ENCODE measurements at regions of chr3 and their contacts with region 1.

Region 1: DNA sequence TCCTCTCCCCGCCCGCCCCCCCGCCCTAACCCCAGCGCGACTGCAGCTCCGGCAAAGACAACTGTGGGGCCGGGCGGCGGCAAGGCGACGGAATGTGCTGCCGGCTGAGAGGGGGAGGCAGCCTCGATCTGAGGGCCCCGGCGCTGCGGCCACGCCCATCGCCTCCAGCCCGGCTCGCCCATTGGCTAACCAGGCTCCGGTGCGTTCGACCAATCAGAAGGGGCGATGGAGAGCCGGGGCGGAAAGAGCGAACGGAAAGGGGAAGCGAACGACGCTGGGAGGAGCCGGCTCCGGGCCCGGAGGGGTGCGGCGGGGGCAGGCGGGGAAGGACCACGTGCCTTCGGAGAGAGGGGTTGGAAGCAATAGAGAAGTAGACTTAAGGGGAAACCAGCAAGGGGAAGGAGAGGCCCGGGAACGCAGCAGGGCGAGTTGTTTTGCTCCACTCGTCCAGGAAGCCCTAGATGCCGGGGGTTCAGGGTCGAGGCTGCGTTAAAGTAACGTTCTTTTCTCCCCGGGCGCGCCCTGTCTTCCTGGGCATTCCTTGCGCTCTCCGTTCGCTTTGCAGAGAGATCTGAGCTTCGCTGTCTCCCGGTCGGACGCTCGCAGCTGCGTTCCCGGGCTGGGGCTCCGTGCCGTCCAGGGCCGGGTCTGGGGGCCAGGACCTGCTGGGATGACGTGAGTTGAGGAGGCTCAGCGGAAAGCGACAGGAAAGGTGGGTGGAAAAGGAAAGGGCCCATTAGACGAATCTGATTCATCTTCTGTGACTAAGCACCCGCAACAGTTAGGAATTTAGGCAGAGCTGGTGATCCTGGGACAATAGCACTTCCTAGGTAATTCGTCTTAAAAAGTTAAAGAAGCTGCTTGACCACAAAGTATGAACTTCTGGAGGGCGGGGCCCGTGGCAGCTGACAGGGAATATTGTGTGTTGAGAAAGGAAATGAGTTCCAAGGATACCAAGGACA is at the start of gene KPNA4:
- DNase-seq: peak; percentile 96 to 98 (median 97)
- ATAC-seq: peak; percentile 95
- H3K4me3 ChIP-seq: peak within 1 kb of the TSS; percentile 86
- H3K4me3 Mint-ChIP-seq: peak within 1 kb of the TSS; percentile 86 to 98 (median 97)
- H3K27ac ChIP-seq: peak within 1 kb of the TSS; percentile 95
- H3K27ac Mint-ChIP-seq: peak within 1 kb of the TSS; percentile 91 to 97 (median 95)
- H3K4me1 ChIP-seq: peaks cover 16 to 19% of the 10 kb centered on the region in 2 donors
- H3K4me1 Mint-ChIP-seq: peaks cover 40 to 58% (median 54%) of the 10 kb centered on the region in 7 donors
- H3K27me3 ChIP-seq: no peaks in the 10 kb centered on the region
- H3K27me3 Mint-ChIP-seq: peaks cover 0 to 2% (median 0%) of the 10 kb centered on the region in 5 donors
- total RNA-seq, gene KPNA4: 38.3 to 55.4 (median 45.9) TPM

Region 2: DNA sequence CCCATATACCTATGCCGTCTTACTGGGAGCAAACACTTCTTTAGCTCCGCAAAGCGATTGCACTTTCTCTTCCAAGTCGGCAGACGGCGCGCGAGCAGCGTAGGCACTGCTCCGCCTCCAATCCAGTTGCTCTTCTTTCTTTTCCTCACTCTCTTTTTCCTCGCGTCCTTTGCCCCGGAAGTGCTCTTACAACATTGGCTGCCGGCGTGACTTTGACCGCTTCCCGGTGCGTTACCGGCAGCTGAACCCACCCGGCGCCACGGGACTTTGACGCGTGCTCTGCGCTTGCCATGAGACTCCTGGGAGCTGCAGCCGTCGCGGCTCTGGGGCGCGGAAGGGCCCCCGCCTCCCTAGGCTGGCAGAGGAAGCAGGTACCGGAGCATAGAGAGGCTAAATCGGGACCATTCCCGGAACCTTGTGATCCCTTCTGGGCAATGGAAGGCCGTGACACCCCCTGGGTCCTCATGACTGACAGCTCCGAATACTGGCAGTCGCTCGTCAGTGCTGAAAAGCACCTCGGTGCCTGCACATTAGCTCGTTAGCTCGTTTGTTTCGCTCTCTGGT is 1921.3 kb before region 1 on chr3 and contains the start of gene GFM1:
- CTCF ChIA-PET with region 1: no interaction called
- POLR2A ChIA-PET with region 1: no interaction called
- intact Hi-C with region 1: loop called (anchors 2 to 5 kb)
- DNase-seq: peak; percentile 76 to 92 (median 86)
- ATAC-seq: peak; percentile 98
- H3K4me3 ChIP-seq: peak within 1 kb of the TSS; percentile 98
- H3K4me3 Mint-ChIP-seq: peak within 1 kb of the TSS; percentile 87 to 98 (median 96)
- H3K27ac ChIP-seq: peak within 1 kb of the TSS; percentile 82
- H3K27ac Mint-ChIP-seq: peak within 1 kb of the TSS; percentile 63 to 96 (median 93)
- H3K4me1 ChIP-seq: peaks cover 8 to 21% of the 10 kb centered on the region in 2 donors
- H3K4me1 Mint-ChIP-seq: peaks cover 17 to 58% (median 41%) of the 10 kb centered on the region in 7 donors
- H3K27me3 ChIP-seq: no peaks in the 10 kb centered on the region
- H3K27me3 Mint-ChIP-seq: no peaks in the 10 kb centered on the region
- total RNA-seq, gene GFM1: 36.4 to 43.4 (median 41.8) TPM

Region 3: GRCh38 chr3:160225176-160226025 is 340.3 kb before region 1 on chr3 and contains the start of gene C3orf80:
- CTCF ChIA-PET with region 1: no interaction called
- POLR2A ChIA-PET with region 1: no interaction called
- intact Hi-C with region 1: no loop called
- DNase-seq: peak in 8 of 9 donors; percentile 7 to 64 (median 34)
- ATAC-seq: peak; percentile 81
- H3K4me3 ChIP-seq: peak within 1 kb of the TSS; percentile 46
- H3K4me3 Mint-ChIP-seq: peak within 1 kb of the TSS; percentile 79 to 92 (median 86)
- H3K27ac ChIP-seq: no peak within 1 kb of the TSS
- H3K27ac Mint-ChIP-seq: no peak within 1 kb of the TSS
- H3K4me1 ChIP-seq: peaks cover 8 to 17% of the 10 kb centered on the region in 2 donors
- H3K4me1 Mint-ChIP-seq: peaks cover 9 to 23% (median 19%) of the 10 kb centered on the region in 7 donors
- H3K27me3 ChIP-seq: peaks cover 11 to 22% of the 10 kb centered on the region in 2 donors
- H3K27me3 Mint-ChIP-seq: peaks cover 46 to 75% (median 53%) of the 10 kb centered on the region in 5 donors
- total RNA-seq, gene C3orf80: 0.19 TPM in 1 of 5 experiments, not detected in the others

Region 4: DNA sequence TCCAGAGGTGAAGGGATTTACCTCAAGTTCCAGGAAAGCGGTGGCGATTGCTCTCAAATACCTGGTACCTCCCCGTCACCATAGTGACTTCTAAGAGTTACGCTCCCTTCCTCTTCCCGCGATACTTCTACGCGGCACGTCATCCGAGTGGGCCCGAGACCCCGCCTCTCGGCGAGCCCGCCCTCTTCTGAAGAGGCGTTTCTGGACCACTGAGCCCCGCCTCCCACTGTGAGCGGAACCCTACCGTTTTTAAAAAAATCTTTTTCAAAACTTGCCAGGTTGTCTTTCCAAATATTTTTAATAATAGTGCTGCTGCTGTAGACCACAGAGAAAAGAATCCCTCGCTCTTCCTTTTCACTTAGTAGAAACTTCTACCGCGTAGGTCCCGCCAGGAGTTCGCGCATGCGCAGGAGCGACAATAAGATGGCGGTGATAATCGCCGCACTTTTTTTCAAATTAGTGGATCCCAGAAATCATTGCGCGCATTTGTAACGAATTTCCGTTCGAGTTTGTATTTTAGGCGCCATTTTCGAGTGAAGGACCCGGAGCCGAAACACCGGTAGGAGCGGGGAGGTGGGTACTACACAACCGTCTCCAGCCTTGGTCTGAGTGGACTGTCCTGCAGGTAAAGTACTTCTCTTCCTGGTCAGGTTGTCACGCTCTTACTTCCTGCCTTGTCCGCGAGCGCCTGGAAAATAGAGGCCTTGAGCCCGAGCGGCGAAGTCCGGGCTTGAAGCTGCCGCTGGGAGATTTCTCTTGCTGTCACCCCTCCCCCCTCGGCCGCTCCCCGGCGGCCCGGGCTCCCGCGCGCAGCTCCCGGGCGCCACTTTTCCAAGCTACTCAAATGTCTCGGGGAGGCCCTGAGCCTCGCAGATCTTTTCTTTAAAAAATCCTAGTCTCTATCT is 166.3 kb before region 1 on chr3 and contains the starts of genes IFT80 and SMC4:
- CTCF ChIA-PET with region 1: no interaction called
- POLR2A ChIA-PET with region 1: interaction called, 3 read pairs
- intact Hi-C with region 1: loop called (anchors 1 kb)
- DNase-seq: peak; percentile 91 to 98 (median 96)
- ATAC-seq: peak; percentile 98
- H3K4me3 ChIP-seq: peak within 1 kb of the TSS; percentile 86
- H3K4me3 Mint-ChIP-seq: peak within 1 kb of the TSS; percentile 86 to 99 (median 98)
- H3K27ac ChIP-seq: peak within 1 kb of the TSS; percentile 88
- H3K27ac Mint-ChIP-seq: peak within 1 kb of the TSS; percentile 98 to 100 (median 100)
- H3K4me1 ChIP-seq: peaks cover 11 to 23% of the 10 kb centered on the region in 2 donors
- H3K4me1 Mint-ChIP-seq: peaks cover 24 to 64% (median 57%) of the 10 kb centered on the region in 7 donors
- H3K27me3 ChIP-seq: peaks cover 0 to 4% of the 10 kb centered on the region in 2 donors
- H3K27me3 Mint-ChIP-seq: peaks cover 5 to 19% (median 9%) of the 10 kb centered on the region in 5 donors
- total RNA-seq, gene IFT80: 19.6 to 36.2 (median 30.4) TPM
- total RNA-seq, gene SMC4: 37.4 to 185 (median 47.9) TPM

Region 5: DNA sequence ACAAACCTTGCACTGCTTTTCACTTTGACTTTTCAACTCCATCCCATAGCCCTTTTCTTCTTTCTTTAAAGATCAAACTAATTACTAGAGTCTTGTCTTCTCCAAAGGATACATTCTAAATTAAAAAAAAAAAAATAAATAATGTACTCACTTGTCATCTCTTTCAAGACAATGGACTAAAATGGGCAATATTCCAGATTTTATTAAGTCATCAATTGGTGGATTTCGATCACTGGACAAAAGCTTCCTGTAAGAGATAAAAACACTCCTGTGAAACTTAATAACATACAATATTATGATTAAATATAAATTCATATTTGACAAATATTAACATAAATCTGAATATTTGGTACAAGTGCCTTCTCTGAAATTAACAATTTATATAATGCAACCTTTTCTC is 34.4 kb before region 1 on chr3:
- CTCF ChIA-PET with region 1: no interaction called
- POLR2A ChIA-PET with region 1: no interaction called
- intact Hi-C with region 1: loop called (anchors 2 to 5 kb)
- DNase-seq: no peak
- ATAC-seq: no peak
- H3K4me3 ChIP-seq: no peak overlapping the region
- H3K4me3 Mint-ChIP-seq: no peak overlapping the region
- H3K27ac ChIP-seq: no peak overlapping the region
- H3K27ac Mint-ChIP-seq: no peak overlapping the region
- H3K4me1 ChIP-seq: no peaks in the 10 kb centered on the region
- H3K4me1 Mint-ChIP-seq: peaks cover 0 to 6% (median 3%) of the 10 kb centered on the region in 7 donors
- H3K27me3 ChIP-seq: no peaks in the 10 kb centered on the region
- H3K27me3 Mint-ChIP-seq: no peaks in the 10 kb centered on the region

Region 6: DNA sequence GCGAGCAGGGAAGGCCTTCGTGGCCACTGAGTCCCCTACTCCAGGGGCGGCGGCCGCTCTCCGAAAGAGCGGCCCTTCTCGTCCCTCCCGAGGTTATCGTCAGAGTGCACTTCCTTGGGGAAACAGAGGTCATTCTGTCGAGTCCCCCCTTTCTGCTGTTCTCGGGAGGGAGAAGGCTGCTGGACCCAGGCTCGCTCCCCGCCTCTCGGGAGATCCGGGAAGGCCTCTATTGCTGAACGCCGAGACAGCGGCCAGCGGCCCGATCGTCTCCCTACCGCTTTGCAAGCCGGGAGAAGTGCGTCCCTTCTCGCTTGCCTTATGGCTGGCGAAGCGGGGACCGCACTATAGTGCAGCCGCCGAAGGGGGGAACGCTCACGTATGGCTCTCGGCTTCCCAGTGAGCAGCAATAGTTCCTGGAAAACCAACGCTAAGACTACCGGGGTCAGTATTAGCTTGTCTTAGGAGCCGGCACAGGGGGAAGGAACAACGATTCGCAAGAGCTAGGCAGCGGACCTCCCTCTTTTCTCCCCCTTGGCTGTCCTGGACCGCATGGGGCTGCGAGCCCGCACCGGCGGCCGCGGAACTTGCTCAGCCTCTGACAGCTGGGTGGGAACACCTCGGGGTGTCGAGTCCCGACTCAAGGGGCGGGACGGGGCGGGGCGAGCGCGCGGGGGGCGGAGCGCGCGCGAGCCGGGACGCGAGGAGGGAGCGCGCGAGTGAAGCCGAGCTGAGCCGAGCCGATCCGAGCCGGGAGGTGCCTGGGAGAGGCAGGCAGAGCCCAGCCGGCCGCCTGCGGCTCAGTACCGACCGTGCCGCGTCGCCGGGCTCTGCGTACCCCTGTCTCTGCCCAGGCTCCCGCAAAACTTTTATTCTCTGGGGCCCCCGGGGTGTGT is 189.4 kb after region 1 on chr3:
- CTCF ChIA-PET with region 1: no interaction called
- POLR2A ChIA-PET with region 1: interaction called, 6 read pairs
- intact Hi-C with region 1: loop called (anchors 1 kb)
- DNase-seq: peak; percentile 76 to 88 (median 85)
- ATAC-seq: peak; percentile 92
- H3K4me3 ChIP-seq: peak overlapping the region; percentile 73
- H3K4me3 Mint-ChIP-seq: peak overlapping the region; percentile 88 to 99 (median 96)
- H3K27ac ChIP-seq: peak overlapping the region; percentile 69
- H3K27ac Mint-ChIP-seq: peak overlapping the region; percentile 88 to 97 (median 94)
- H3K4me1 ChIP-seq: peaks cover 10 to 11% of the 10 kb centered on the region in 2 donors
- H3K4me1 Mint-ChIP-seq: peaks cover 27 to 36% (median 30%) of the 10 kb centered on the region in 7 donors
- H3K27me3 ChIP-seq: peaks cover 0 to 6% of the 10 kb centered on the region in 2 donors
- H3K27me3 Mint-ChIP-seq: peaks cover 5 to 41% (median 10%) of the 10 kb centered on the region in 5 donors

Region 7: DNA sequence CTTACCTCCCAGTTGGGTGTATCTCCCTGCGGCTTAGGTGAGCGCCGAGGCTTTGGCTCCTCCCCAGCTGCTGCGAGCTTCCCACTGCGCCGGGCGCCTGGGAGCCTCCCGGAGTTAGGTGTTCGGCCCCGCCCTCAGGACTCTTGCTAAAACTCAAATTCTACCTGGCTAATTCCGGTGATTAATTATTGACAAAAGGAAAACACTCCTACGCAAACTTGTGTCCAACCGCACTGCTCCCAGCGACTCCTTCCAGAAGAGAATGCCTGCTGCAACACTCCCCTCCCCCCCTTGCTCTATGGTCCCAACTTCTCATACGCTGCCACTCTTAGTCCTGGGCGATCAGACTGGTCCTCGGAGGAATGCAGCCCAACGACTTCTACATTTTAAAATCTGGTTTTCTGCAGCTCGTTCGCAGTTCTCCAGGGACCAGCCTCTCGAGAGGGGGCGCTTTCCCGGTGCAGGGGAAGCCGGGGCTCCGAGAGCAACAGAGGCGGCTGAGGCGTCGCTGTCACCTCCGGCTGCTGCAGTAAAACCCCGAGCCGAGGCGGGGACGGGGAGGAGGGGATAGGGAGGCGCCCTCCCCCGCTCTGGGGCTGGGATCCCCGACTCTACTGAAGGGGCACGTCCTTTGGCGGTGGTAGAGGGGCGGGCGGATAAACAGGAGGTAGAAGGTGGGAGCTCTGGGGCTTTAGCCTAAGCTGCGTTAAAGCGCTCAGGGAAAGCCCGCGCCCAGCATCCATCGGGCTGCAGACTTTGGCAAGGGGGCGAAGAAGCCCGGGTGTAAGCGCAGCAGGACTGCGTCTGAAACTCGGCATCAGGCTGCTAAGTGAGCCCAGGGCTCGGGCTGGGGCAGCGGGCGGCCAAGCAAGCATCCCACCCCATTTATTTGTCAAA is 806.0 kb after region 1 on chr3 and contains the start of gene SPTSSB:
- CTCF ChIA-PET with region 1: no interaction called
- POLR2A ChIA-PET with region 1: no interaction called
- intact Hi-C with region 1: loop called in 1 of 2 experiments (anchors 10 kb)
- DNase-seq: peak; percentile 21 to 57 (median 43)
- ATAC-seq: peak; percentile 75
- H3K4me3 ChIP-seq: peak within 1 kb of the TSS; percentile 68
- H3K4me3 Mint-ChIP-seq: peak within 1 kb of the TSS; percentile 79 to 93 (median 88)
- H3K27ac ChIP-seq: no peak within 1 kb of the TSS
- H3K27ac Mint-ChIP-seq: peak within 1 kb of the TSS in 3 of 9 donors; percentile 46 to 64 (median 57)
- H3K4me1 ChIP-seq: peaks cover 7% of the 10 kb centered on the region in 2 donors
- H3K4me1 Mint-ChIP-seq: peaks cover 7 to 21% (median 18%) of the 10 kb centered on the region in 7 donors
- H3K27me3 ChIP-seq: peaks cover 0 to 15% of the 10 kb centered on the region in 2 donors
- H3K27me3 Mint-ChIP-seq: peaks cover 6 to 84% (median 22%) of the 10 kb centered on the region in 5 donors
- total RNA-seq, gene SPTSSB: 0.34 to 1.6 TPM in 2 of 5 experiments, not detected in the others

Measured in naive thymus-derived CD4-positive, alpha-beta T cell (primary cell).